ENCODE measurements at regions of chr18 and their contacts with region 1.

Region 1: GRCh38 chr18:864872-865273 is 39.8 kb upstream of the ADCYAP1 start:
- DNase-seq: peak; percentile 85
- H3K4me3 ChIP-seq: no peak overlapping the region
- H3K4me1 ChIP-seq: peaks cover 17% of the 10 kb centered on the region
- H3K27me3 ChIP-seq: peaks cover 4% of the 10 kb centered on the region; the same call in 1 of the 2 replicates

Region 2: GRCh38 chr18:551404-552061 is 313.3 kb before region 1 on chr18:
- in situ Hi-C with region 1: no loop called
- DNase-seq: no peak
- H3K4me3 ChIP-seq: no peak overlapping the region
- H3K4me1 ChIP-seq: no peaks in the 10 kb centered on the region
- H3K27me3 ChIP-seq: no peaks in the 10 kb centered on the region

Region 3: DNA sequence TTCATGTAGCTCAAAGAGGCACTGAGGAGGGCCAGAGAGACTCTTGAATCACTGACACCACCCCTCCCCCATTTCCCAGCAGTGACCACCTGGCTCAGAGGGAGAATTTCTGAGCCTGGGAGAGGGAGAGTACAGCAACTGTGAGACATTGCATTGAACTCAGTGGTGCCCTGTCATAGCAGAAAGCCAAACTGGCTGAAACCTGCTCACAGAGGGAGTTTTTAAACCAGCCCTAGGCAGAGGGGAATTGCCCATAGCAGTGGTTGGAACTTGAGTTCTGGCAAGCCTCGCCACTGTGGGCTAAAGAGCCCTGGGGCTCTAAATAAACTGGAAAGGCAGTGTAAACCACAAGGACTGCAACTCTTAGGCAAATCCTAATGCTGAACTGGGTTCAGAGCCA is 282.9 kb after region 1 on chr18:
- in situ Hi-C with region 1: no loop called
- DNase-seq: no peak
- H3K4me3 ChIP-seq: no peak overlapping the region
- H3K4me1 ChIP-seq: no peaks in the 10 kb centered on the region
- H3K27me3 ChIP-seq: no peaks in the 10 kb centered on the region

Region 4: GRCh38 chr18:2104620-2105462 is 1240.0 kb after region 1 on chr18:
- in situ Hi-C with region 1: loop called (anchors 25 kb)
- DNase-seq: peak; percentile 16 to 69
- H3K4me3 ChIP-seq: no peak overlapping the region
- H3K4me1 ChIP-seq: no peaks in the 10 kb centered on the region
- H3K27me3 ChIP-seq: no peaks in the 10 kb centered on the region

Region 5: GRCh38 chr18:2240311-2240705 is 1375.4 kb after region 1 on chr18:
- in situ Hi-C with region 1: loop called (anchors 25 kb)
- DNase-seq: no peak
- H3K4me3 ChIP-seq: no peak overlapping the region
- H3K4me1 ChIP-seq: no peaks in the 10 kb centered on the region
- H3K27me3 ChIP-seq: no peaks in the 10 kb centered on the region

Region 6: GRCh38 chr18:2559249-2559648 is 1694.4 kb after region 1 on chr18:
- in situ Hi-C with region 1: loop called (anchors 10 kb)
- DNase-seq: no peak
- H3K4me3 ChIP-seq: no peak overlapping the region
- H3K4me1 ChIP-seq: no peaks in the 10 kb centered on the region
- H3K27me3 ChIP-seq: no peaks in the 10 kb centered on the region

Region 7: GRCh38 chr18:2589345-2590068 is 1724.6 kb after region 1 on chr18:
- in situ Hi-C with region 1: no loop called
- DNase-seq: no peak
- H3K4me3 ChIP-seq: no peak overlapping the region
- H3K4me1 ChIP-seq: no peaks in the 10 kb centered on the region; the same call in 1 of the 2 replicates
- H3K27me3 ChIP-seq: no peaks in the 10 kb centered on the region

Measured in HAP-1 (cell line).